Uterus (tissue), 4 donors: ENCODE measurements at regions of chr6 and their contacts with region 1.

Region 1: GRCh38 chr6:53651764-53652401 is 13.7 kb downstream of the KLHL31 start:
- DNase-seq: peak; percentile 39 to 54
- H3K4me3 ChIP-seq: peak overlapping the region; percentile 33 to 56
- H3K27ac ChIP-seq: no peak overlapping the region
- H3K4me1 ChIP-seq: peaks cover 0 to 3% of the 10 kb centered on the region in 2 donors
- H3K27me3 ChIP-seq: no peaks in the 10 kb centered on the region
- CTCF ChIP-seq: peak; percentile 21 to 33 (median 26)
- POLR2A ChIP-seq: peak in 1 of 2 donors; percentile 30

Region 2: DNA sequence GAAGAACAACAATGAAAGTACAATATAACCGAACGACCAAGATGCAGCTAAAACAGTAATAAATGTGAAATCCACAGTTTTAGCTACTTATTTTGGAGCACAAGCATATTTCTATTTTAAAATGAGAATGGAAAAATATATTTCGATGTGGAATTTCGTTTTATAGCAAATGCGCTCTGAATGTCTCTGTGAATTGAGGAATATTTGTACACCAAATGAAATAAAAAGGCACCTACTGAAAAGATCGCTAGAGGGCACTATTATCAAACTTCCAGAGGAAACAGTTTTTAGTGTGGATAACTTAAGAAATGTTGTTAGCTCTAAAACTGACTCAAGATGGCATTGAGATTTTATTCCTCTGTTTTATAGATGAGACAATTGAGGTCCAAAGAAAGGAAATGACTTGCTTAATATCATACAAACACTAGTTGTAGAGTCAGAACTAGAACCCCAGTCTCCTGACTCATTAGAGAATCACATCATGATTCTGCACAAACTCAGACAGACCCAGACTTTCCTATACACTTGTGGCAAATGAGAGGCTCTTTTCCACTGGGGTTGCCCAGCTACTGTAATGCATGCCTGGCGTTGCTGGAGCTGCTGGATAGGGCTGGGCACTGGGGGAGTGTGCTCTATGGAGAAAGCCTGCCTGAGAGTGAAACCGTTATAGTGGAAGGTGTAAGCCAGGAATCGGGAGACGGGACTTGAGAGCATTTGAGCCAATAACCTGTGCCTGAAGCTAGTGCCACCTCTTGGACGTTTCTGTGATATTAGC is 158.8 kb before region 1 on chr6:
- intact Hi-C with region 1: loop called (anchors 5 kb)
- DNase-seq: no peak
- H3K4me3 ChIP-seq: no peak overlapping the region
- H3K27ac ChIP-seq: no peak overlapping the region
- H3K4me1 ChIP-seq: peaks cover 0 to 3% of the 10 kb centered on the region in 2 donors
- H3K27me3 ChIP-seq: no peaks in the 10 kb centered on the region
- CTCF ChIP-seq: peak; percentile 55 to 80 (median 71)
- POLR2A ChIP-seq: no peak